Ascending aorta (tissue), 2 donors: ENCODE measurements at regions of chr17 and their contacts with region 1.

Region 1: GRCh38 chr17:43094129-43094835 is 30.9 kb downstream of the BRCA1 start:
- DNase-seq: peak in 1 of 2 donors; percentile 69
- H3K4me3 ChIP-seq: no peak overlapping the region
- H3K27ac ChIP-seq: peak overlapping the region; percentile 47 to 73
- H3K4me1 ChIP-seq: peaks cover 8 to 30% of the 10 kb centered on the region in 2 donors
- H3K27me3 ChIP-seq: no peaks in the 10 kb centered on the region
- CTCF ChIP-seq: no peak

Region 2: DNA sequence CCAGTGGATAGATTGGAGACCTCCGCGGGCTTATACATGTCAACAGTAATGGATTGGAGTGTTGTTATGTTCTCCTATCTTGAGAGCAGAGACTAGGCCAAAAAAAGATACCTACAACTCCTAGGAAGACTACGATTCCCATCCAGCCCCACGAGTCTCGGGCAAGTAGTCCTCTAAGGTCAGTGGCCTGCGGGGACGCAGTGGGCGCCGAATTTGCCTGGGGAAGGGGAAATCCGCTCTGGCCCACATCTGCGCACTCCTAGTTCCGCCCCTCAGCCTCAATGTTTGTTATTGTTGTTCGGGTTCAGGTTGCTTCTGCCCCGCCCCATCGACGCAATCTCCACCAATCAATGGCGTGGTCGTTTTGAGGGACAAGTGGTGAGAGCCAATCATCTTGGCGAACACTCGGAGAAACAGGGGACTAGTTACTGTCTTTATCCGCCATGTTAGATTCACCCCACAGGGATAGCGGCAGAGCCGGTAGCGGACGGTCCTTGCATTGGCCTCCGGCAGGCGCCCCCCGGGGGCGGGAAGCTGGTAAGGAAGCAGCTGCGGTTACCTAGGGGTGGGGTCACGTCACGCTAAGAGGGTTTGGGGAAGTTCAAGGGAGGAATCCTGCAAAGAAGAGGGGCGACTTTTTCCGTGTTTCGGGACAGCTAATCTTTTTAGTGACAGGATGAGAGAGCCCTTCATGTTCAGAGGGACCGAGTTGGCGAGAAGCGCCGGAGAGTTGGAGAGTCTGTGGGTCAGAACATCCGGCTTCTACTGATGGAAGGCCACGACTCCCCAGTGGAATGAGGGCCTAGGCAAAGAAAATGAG is 76.7 kb after region 1 on chr17 and contains the start of gene NBR1:
- intact Hi-C with region 1: loop called (anchors 2 kb)
- DNase-seq: peak; percentile 95 to 98
- H3K4me3 ChIP-seq: peak within 1 kb of the TSS; percentile 76 to 82
- H3K27ac ChIP-seq: peak within 1 kb of the TSS; percentile 97 to 99
- H3K4me1 ChIP-seq: peaks cover 0 to 41% of the 10 kb centered on the region in 2 donors
- H3K27me3 ChIP-seq: no peaks in the 10 kb centered on the region
- CTCF ChIP-seq: no peak
- total RNA-seq, gene NBR1: 45.6 TPM